K562 (cell line): ENCODE measurements at regions of chr4 and their contacts with region 1.

Region 1: GRCh38 chr4:172202480-172203076 is 389.4 kb downstream of the GALNTL6 start:
- DNase-seq: peak; percentile 16 to 45 (median 32)
- ATAC-seq: peak; percentile 64; the same call in 1 of the 3 replicates
- H3K4me3 ChIP-seq: no peak overlapping the region
- H3K27ac ChIP-seq: no peak overlapping the region
- H3K4me1 ChIP-seq: no peaks in the 10 kb centered on the region
- H3K27me3 ChIP-seq: no peaks in the 10 kb centered on the region
- CTCF ChIP-seq: peak; percentile 38 to 66 (median 50); a peak in 5 of 6 replicates
- EP300 ChIP-seq: no peak
- POLR2A ChIP-seq: no peak
- RAD21 ChIP-seq: peak; percentile 69 to 86

Region 2: GRCh38 chr4:170259631-170260153 is 1942.9 kb before region 1 on chr4:
- CTCF ChIA-PET with region 1: interaction called, 3 read pairs
- POLR2A ChIA-PET with region 1: no interaction called
- in situ Hi-C with region 1: no loop called
- intact Hi-C with region 1: loop called (anchors 5 kb)
- DNase-seq: peak; percentile 40 to 76 (median 58)
- ATAC-seq: peak; percentile 96
- H3K4me3 ChIP-seq: no peak overlapping the region
- H3K27ac ChIP-seq: no peak overlapping the region
- H3K4me1 ChIP-seq: no peaks in the 10 kb centered on the region
- H3K27me3 ChIP-seq: no peaks in the 10 kb centered on the region
- CTCF ChIP-seq: peak; percentile 74 to 83 (median 82)
- EP300 ChIP-seq: no peak
- POLR2A ChIP-seq: no peak
- RAD21 ChIP-seq: peak; percentile 66 to 67

Region 3: DNA sequence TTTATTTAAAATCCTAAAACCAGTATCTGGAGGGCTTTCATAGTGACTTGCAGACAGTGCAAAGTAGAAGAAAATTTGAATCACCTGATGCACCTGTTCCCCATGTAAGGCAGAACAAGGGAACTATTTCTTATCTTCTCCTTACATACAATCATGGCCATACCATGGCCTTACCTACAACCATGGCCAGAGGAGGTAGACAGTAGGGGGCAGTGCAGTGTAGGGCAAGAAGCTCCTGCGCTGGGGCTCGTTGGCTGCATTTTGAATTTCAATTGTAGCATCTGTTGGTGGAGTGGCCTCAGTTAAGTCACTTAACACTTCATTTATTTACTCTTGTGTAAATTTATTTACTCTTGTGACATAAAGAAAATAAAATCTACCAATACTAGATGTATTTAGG is 356.3 kb before region 1 on chr4:
- CTCF ChIA-PET with region 1: no interaction called
- POLR2A ChIA-PET with region 1: no interaction called
- in situ Hi-C with region 1: no loop called
- intact Hi-C with region 1: loop called (anchors 1 kb)
- DNase-seq: peak; percentile 17 to 55 (median 23)
- ATAC-seq: peak; percentile 65
- H3K4me3 ChIP-seq: no peak overlapping the region
- H3K27ac ChIP-seq: no peak overlapping the region
- H3K4me1 ChIP-seq: no peaks in the 10 kb centered on the region
- H3K27me3 ChIP-seq: no peaks in the 10 kb centered on the region
- CTCF ChIP-seq: peak; percentile 42 to 53 (median 49); a peak in 5 of 6 replicates
- EP300 ChIP-seq: no peak
- POLR2A ChIP-seq: no peak
- RAD21 ChIP-seq: peak; percentile 48 to 52

Region 4: GRCh38 chr4:172155838-172156345 is 46.7 kb before region 1 on chr4:
- CTCF ChIA-PET with region 1: no interaction called
- POLR2A ChIA-PET with region 1: no interaction called
- in situ Hi-C with region 1: no loop called
- intact Hi-C with region 1: loop called (anchors 1 kb)
- DNase-seq: peak; percentile 34 to 93 (median 57)
- ATAC-seq: peak; percentile 91
- H3K4me3 ChIP-seq: peak overlapping the region; percentile 41
- H3K27ac ChIP-seq: peak overlapping the region; percentile 79
- H3K4me1 ChIP-seq: peaks cover 0 to 5% of the 10 kb centered on the region in 2 experiments; a peak in 3 of 5 replicates
- H3K27me3 ChIP-seq: no peaks in the 10 kb centered on the region
- CTCF ChIP-seq: peak; percentile 57 to 70 (median 57)
- EP300 ChIP-seq: peak; percentile 33; the same call in 1 of the 2 replicates
- POLR2A ChIP-seq: peak; percentile 89
- RAD21 ChIP-seq: peak; percentile 40 to 42; a peak in 3 of 4 replicates

Region 5: GRCh38 chr4:172830295-172830764 is 627.8 kb after region 1 on chr4:
- CTCF ChIA-PET with region 1: no interaction called
- POLR2A ChIA-PET with region 1: no interaction called
- in situ Hi-C with region 1: no loop called
- intact Hi-C with region 1: loop called (anchors 10 kb)
- DNase-seq: peak; percentile 16 to 50 (median 30)
- ATAC-seq: no peak
- H3K4me3 ChIP-seq: no peak overlapping the region
- H3K27ac ChIP-seq: no peak overlapping the region
- H3K4me1 ChIP-seq: no peaks in the 10 kb centered on the region
- H3K27me3 ChIP-seq: peaks cover 0 to 10% of the 10 kb centered on the region in 2 experiments; a peak in 1 of 5 replicates
- CTCF ChIP-seq: peak; percentile 3 to 53 (median 31); a peak in 2 of 6 replicates
- EP300 ChIP-seq: no peak
- POLR2A ChIP-seq: no peak
- RAD21 ChIP-seq: peak; percentile 52 to 56